ENCODE measurements at regions of chr10 and their contacts with region 1.

Region 1: GRCh38 chr10:7410862-7411670 is at the start of gene SFMBT2:
- DNase-seq: peak; percentile 53 to 74 (median 68)
- H3K4me3 ChIP-seq: peak within 1 kb of the TSS; percentile 11 to 86 (median 47)
- H3K27ac ChIP-seq: peak within 1 kb of the TSS in 4 of 5 donors; percentile 63 to 85 (median 84)
- H3K4me1 ChIP-seq: peaks cover 9 to 30% of the 10 kb centered on the region in 2 donors
- H3K27me3 ChIP-seq: peaks cover 8% of the 10 kb centered on the region
- CTCF ChIP-seq: peak in 2 of 6 experiments; percentile 23 to 24
- POLR2A ChIP-seq: peak in 1 of 2 donors; percentile 34
- total RNA-seq, gene SFMBT2: 5.9 to 17.9 (median 14.4) TPM

Region 2: GRCh38 chr10:6721480-6721879 is 689.6 kb before region 1 on chr10:
- intact Hi-C with region 1: no loop called
- DNase-seq: peak in 5 of 7 donors; percentile 16 to 55 (median 23)
- H3K4me3 ChIP-seq: no peak overlapping the region
- H3K27ac ChIP-seq: peak overlapping the region in 1 of 5 donors; percentile 14
- H3K4me1 ChIP-seq: no peaks in the 10 kb centered on the region
- H3K27me3 ChIP-seq: no peaks in the 10 kb centered on the region
- CTCF ChIP-seq: no peak
- POLR2A ChIP-seq: no peak

Region 3: DNA sequence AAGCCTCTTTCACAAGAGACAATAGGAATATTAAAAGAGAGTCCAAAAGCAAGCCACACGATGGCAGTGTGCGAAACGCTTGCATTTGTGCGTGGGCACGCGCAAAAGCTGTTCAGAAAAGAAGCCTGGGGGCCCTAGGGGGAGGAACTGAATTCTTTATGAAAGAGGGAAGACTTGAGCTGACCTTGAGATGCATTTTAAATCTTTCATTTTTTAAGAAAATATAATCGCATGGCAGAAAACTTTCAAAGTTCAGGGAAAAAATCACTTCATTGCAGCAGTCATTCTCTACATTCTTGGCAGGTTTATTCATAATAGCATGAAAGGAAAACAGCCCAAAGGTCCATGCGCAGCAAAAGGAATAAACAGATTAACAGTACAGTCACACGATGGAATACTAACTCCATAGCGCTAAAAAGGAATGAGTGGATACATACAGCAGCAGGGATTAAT is 624.5 kb before region 1 on chr10:
- intact Hi-C with region 1: loop called in 1 of 2 experiments (anchors 10 kb)
- DNase-seq: peak in 5 of 7 donors; percentile 13 to 24 (median 19)
- H3K4me3 ChIP-seq: no peak overlapping the region
- H3K27ac ChIP-seq: no peak overlapping the region
- H3K4me1 ChIP-seq: no peaks in the 10 kb centered on the region
- H3K27me3 ChIP-seq: no peaks in the 10 kb centered on the region
- CTCF ChIP-seq: peak in 3 of 6 experiments; percentile 21 to 43 (median 40)
- POLR2A ChIP-seq: no peak

Region 4: DNA sequence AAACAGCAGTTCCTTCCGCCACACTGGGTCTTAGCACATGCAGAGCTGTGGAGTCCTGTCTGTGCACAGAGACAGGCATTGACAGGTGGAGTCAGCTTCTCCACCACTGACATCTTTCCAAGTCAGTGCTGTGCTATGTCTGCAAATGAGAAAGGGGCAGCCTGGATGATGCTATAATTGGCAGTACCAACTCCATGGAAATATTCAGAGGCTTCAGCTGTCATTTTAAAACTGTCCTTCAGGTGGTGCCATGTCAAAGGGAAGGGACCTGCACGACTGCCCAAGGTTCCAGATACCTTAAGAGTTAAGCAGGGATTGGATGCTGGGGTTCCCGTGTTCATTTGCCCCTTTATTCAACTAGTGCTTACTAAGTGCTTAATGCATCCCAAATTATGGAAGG is 572.9 kb before region 1 on chr10:
- intact Hi-C with region 1: loop called in 1 of 2 experiments (anchors 10 kb)
- DNase-seq: peak in 1 of 7 donors; percentile 1
- H3K4me3 ChIP-seq: no peak overlapping the region
- H3K27ac ChIP-seq: no peak overlapping the region
- H3K4me1 ChIP-seq: no peaks in the 10 kb centered on the region
- H3K27me3 ChIP-seq: no peaks in the 10 kb centered on the region
- CTCF ChIP-seq: peak in 3 of 6 experiments; percentile 25 to 37 (median 28)
- POLR2A ChIP-seq: no peak

Region 5: DNA sequence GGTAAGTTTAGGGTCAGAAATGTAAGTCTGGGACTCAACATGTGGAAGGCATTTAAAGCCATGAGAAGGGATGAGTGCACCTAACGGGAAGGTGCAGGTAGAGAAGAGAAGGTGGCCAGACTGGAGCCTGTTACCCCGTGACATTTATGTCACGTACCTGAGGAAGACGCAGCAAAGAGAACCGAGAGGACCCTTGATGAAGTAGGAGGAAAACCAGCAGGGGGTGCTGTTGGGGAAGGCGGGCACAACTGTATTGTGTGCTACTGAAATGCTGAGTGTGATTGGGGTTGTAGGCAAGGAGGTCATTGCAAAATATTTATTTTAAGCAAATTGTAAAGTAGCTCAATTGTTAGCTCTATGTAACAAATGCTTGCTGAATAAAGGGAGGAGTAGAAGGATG is 492.8 kb before region 1 on chr10:
- intact Hi-C with region 1: loop called (anchors 10 kb)
- DNase-seq: peak in 6 of 7 donors; percentile 24 to 66 (median 48)
- H3K4me3 ChIP-seq: no peak overlapping the region
- H3K27ac ChIP-seq: no peak overlapping the region
- H3K4me1 ChIP-seq: peaks cover 0 to 2% of the 10 kb centered on the region in 2 donors
- H3K27me3 ChIP-seq: no peaks in the 10 kb centered on the region
- CTCF ChIP-seq: peak in 5 of 6 experiments; percentile 15 to 48 (median 40)
- POLR2A ChIP-seq: no peak

Region 6: GRCh38 chr10:7260412-7260900 is 150.6 kb before region 1 on chr10:
- intact Hi-C with region 1: loop called (anchors 5 kb)
- DNase-seq: peak; percentile 83 to 97 (median 94)
- H3K4me3 ChIP-seq: no peak overlapping the region
- H3K27ac ChIP-seq: peak overlapping the region in 2 of 5 donors; percentile 70 to 72
- H3K4me1 ChIP-seq: peaks cover 14 to 42% of the 10 kb centered on the region in 2 donors
- H3K27me3 ChIP-seq: no peaks in the 10 kb centered on the region
- CTCF ChIP-seq: peak; percentile 61 to 91 (median 84)
- POLR2A ChIP-seq: no peak

Region 7: DNA sequence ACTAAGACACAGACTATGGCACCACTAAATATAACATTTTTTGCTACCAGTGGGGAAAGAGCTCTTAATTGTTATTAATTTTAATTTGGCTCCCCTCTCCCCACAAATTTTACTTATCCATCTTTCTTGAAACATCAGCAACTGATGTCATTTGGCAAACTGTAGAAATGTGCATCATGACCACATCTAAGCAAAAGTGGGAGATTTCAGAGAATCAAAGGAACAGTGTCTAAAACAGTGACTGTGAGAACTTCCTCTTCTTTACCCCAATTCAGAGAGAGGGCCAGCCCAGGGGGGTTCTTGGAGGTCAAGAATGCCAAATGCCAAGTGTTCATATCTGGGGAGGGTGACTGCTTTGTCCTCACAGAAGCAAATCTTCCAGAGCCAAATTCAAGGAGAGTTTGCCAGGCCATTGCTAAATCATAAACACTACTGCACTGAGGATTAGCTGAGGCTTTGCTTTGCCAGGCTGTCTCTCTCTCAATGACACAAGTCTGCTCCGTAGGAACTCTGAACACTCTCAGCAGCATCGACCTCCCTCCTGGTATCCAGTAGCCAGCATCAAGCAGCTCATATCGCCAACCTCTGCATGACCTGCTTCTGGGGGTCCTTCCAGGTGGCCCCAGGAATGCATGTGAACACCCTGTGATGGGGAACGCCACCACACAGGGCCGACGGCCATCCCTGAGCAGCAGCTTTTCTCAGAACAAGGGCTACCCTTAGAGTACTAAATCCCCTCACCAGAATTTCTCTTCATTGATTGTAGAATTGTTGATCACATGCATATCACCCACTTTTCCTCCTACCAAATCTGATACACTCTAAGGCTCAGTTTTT is 190.2 kb after region 1 on chr10:
- intact Hi-C with region 1: no loop called
- DNase-seq: no peak
- H3K4me3 ChIP-seq: no peak overlapping the region
- H3K27ac ChIP-seq: no peak overlapping the region
- H3K4me1 ChIP-seq: no peaks in the 10 kb centered on the region
- H3K27me3 ChIP-seq: no peaks in the 10 kb centered on the region
- CTCF ChIP-seq: no peak
- POLR2A ChIP-seq: no peak

Region 8: DNA sequence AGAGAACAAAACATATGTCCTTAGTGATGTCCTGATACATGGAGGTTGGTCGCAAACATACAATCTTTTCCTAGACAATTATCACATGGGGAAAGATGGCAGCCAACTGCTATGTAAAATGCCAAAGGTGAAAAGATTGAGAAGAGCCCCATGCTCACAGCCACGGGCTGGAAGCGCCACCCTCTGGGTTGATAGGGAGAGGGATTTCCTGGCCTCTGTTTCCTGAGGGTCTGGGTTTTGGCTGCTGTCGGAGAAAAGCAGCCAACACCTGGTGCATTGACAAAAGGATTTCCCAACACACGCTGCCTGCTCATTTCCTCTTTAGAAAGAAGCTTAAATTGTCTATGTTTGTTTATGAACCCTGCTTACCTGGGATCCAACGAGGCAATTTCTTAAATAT is 211.9 kb after region 1 on chr10:
- intact Hi-C with region 1: no loop called
- DNase-seq: no peak
- H3K4me3 ChIP-seq: no peak overlapping the region
- H3K27ac ChIP-seq: no peak overlapping the region
- H3K4me1 ChIP-seq: no peaks in the 10 kb centered on the region
- H3K27me3 ChIP-seq: no peaks in the 10 kb centered on the region
- CTCF ChIP-seq: peak in 2 of 6 experiments; percentile 10 to 15
- POLR2A ChIP-seq: no peak